ENCODE measurements at regions of chr11 and their contacts with region 1.

Region 1: DNA sequence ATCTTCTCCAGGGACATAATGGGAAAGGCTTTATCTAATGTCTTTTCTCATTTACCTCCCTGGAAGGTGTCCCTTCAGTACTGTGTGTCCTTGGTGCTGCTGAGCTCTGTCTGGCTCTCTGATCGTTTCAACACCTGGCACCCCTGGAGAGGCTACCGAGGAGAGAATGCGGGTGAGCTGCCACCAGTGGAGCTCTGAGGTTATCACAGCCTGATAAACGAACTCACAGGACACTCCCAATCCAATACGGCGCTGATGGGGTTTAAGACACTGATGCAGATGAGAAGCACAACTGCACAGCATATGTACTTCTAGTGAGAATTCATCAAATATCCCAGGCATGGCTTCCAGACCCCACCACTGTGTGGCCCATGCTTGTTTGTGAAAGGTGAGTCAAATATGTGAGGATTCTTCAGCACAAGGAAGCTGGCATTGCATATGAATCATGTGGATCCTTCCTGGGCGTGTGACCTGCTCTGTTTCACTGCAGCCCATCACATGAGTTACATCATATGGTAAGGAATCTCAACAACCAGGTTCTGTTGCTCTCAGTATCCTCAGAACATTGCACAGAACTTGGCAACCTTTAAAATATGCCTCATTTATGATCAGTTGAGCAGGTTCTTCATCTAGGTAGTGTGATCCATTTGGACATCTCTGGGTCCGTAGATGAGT is 34.8 kb upstream of the VWA5A start:
- DNase-seq: no peak
- ATAC-seq: no peak
- H3K4me3 ChIP-seq: no peak overlapping the region
- H3K27ac ChIP-seq: no peak overlapping the region
- H3K4me1 ChIP-seq: peaks cover 0 to 10% (median 6%) of the 10 kb centered on the region in 9 donors
- H3K27me3 ChIP-seq: peaks cover 0 to 74% (median 38%) of the 10 kb centered on the region in 7 donors
- CTCF ChIP-seq: no peak

Region 2: DNA sequence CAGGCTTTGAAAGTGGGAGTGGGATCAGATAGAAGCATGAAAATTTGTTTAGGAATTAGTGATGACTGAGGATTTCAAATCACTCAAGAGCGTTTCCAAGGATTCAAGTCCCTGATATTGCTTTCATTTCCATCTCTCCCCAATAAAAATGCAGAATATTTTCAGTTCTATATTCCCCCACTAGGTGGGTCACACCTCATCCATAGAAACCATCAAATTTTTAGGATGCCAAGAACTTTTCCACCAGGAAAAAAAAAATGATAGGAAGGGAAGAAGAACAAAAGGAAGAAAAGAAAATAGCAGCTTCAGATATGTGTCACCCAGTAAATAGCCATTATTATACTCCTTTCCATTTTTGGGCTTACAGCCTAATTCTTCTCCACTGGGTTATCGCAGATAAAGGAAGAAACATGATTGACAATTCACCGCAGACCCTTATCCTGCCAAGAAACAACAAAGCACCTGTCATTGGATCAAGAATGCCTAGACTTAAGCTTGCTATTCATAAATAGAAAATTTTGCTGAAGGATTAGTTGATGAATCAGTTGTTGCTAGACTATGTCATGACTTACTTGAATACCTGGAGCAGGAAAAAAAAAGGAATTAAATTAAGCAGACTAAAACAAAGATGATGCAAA is 72.4 kb after region 1 on chr11:
- intact Hi-C with region 1: loop called in 1 of 10 experiments (anchors 2 kb)
- DNase-seq: no peak
- ATAC-seq: no peak
- H3K4me3 ChIP-seq: no peak overlapping the region
- H3K27ac ChIP-seq: no peak overlapping the region
- H3K4me1 ChIP-seq: no peaks in the 10 kb centered on the region
- H3K27me3 ChIP-seq: no peaks in the 10 kb centered on the region
- CTCF ChIP-seq: no peak